ENCODE measurements at regions of chr6 and their contacts with region 1.

Region 1: GRCh38 chr6:90238496-90239266 is 58.0 kb downstream of the BACH2 start:
- DNase-seq: no peak
- H3K4me3 Mint-ChIP-seq: no peak overlapping the region
- H3K27ac Mint-ChIP-seq: peak overlapping the region; percentile 70
- H3K4me1 Mint-ChIP-seq: peaks cover 68% of the 10 kb centered on the region
- H3K27me3 Mint-ChIP-seq: no peaks in the 10 kb centered on the region

Region 2: GRCh38 chr6:90251295-90251992 is 12.8 kb after region 1 on chr6:
- intact Hi-C with region 1: loop called (anchors 1 kb)
- DNase-seq: no peak
- H3K4me3 Mint-ChIP-seq: peak overlapping the region; percentile 48
- H3K27ac Mint-ChIP-seq: peak overlapping the region; percentile 83
- H3K4me1 Mint-ChIP-seq: peaks cover 71% of the 10 kb centered on the region
- H3K27me3 Mint-ChIP-seq: no peaks in the 10 kb centered on the region

Region 3: DNA sequence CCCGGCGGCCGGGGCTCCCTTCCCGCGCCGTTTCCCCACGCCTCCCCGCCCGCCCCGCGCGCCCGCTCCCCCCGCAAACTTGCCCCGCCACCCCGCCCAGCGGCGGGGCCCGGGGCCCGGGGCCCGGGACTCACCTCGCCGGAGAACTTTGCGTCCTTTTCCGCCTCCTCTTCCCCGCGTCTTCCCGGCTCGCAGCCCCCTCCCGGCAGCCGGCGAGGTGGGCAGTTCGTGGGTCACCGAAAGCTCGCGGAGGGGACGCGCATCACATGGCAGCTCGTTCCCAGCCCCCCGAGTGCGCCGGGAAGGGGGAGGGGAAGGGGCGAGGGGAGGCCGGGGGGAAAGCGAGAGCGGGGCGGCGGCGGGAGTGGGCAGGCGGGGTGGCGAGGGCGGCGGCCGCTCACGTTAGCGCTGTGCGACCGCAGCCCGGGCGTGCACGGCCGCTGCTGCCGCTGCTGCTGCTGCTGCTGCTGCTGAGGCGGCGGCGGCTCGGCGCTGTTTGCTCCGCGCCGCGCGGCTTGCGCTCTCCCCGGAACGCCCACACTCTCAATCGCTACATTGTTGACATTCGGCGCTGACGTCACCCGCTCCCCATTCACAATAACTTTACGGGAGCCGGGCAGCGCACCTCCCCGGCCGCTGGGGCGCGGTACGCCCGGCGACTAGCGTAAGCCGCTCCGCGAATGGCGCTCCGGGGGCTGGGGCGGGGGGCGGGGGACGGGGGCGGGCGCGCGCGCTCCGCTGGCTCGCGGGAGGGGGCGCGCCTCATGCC is 57.8 kb after region 1 on chr6 and contains the start of gene BACH2:
- intact Hi-C with region 1: no loop called
- DNase-seq: peak; percentile 91
- H3K4me3 Mint-ChIP-seq: peak within 1 kb of the TSS; percentile 91
- H3K27ac Mint-ChIP-seq: peak within 1 kb of the TSS; percentile 86
- H3K4me1 Mint-ChIP-seq: peaks cover 50% of the 10 kb centered on the region
- H3K27me3 Mint-ChIP-seq: peaks cover 13% of the 10 kb centered on the region
- total RNA-seq, gene BACH2: 88.8 and 89.7 TPM in 2 replicates

Region 4: GRCh38 chr6:90715093-90715655 is 476.5 kb after region 1 on chr6:
- intact Hi-C with region 1: no loop called
- DNase-seq: no peak
- H3K4me3 Mint-ChIP-seq: no peak overlapping the region
- H3K27ac Mint-ChIP-seq: no peak overlapping the region
- H3K4me1 Mint-ChIP-seq: peaks cover 4% of the 10 kb centered on the region
- H3K27me3 Mint-ChIP-seq: peaks cover 12% of the 10 kb centered on the region